Natural killer cell (primary cell): ENCODE measurements at regions of chr5 and their contacts with region 1.

Region 1: DNA sequence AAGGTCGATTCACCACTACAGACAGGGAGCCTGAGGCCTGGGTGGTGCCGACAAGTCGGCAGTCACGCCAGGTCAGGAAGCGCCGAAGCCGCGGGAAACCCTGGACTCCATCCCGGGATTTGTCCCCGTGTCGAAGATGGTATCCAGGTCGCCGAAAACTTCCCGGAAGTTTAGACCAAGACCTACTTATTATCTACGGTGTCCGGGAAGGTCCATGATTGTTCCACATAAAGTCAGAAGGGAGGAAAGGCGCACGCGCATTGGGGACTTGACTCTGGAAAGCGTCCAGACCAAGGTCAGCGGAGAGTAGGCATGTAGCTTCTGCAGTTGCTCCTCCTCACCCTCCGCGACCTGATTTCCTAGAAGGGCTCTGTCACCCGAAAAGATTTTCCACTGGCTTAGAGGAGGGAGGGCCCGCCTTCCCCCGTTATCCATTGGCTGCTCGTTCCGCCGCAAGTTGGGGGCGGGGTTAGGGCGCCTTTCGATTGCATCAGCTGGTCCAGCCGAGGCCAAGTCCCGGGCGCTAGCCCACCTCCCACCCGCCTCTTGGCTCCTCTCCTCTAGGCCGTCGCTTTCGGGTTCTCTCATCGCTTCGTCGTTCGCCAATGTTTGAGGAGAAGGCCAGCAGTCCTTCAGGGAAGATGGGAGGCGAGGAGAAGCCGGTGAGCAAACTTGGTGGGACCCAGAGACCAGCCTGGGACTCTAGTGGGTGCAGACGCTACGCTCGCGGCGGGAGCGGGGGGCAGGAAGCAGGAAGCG is at the start of gene TARS1:
- DNase-seq: peak; percentile 94 to 96
- ATAC-seq: peak; percentile 92 to 98 (median 92)
- H3K4me3 ChIP-seq: peak within 1 kb of the TSS; percentile 91
- H3K4me3 Mint-ChIP-seq: no peak within 1 kb of the TSS
- H3K27ac ChIP-seq: peak within 1 kb of the TSS; percentile 90
- H3K27ac Mint-ChIP-seq: no peak within 1 kb of the TSS
- H3K4me1 ChIP-seq: peaks cover 21% of the 10 kb centered on the region
- H3K4me1 Mint-ChIP-seq: peaks cover 23 to 31% of the 10 kb centered on the region in 2 donors
- H3K27me3 ChIP-seq: no peaks in the 10 kb centered on the region
- H3K27me3 Mint-ChIP-seq: no peaks in the 10 kb centered on the region
- CTCF ChIP-seq: no peak
- total RNA-seq, gene TARS1: 59.9 to 74.8 (median 64.6) TPM

Region 2: DNA sequence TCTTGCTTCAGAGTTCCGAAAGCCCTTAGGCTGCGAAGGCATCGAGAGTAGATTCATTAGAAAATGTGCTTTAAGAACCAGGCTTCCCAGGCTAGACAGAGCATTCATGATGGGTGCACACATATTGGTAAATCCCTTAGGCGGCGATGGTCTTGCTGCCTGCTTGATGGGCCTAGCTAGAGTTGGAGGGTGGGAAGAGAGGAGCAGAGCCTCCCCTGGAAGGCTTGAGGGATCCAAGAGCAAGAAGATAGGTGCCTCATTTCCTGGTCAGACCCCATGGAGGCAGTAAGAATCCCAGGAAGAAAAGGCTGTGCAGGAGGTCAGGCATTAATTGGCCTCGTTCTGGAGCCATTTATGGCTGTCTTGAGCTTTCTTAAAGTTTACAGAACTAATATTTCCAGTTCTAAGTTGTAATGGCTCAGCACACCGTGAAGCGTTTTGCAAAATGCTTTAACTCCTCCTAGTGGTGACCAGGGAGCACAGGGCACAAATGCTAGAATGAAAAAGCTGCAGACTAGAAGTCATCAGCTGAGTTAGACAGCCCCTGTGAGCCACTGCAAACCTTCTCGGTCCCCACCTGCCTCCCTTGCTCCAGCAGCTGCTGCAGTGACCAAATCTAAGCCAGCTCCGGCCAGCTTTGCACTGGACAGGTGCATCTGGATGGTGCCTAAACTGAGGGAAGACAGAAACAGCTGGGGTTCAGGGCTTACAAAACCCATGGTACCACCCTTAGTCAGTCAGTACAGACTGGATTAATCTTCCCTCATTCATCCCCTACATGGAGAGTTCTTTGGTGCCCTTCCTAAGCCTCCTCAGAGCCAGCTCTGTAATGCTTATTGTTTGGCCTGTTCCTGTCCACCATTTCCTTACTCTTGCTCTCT is 529.2 kb after region 1 on chr5:
- intact Hi-C with region 1: loop called (anchors 1 kb)
- DNase-seq: peak in 1 of 2 donors; percentile 42
- ATAC-seq: peak in 1 of 3 donors; percentile 35
- H3K4me3 ChIP-seq: no peak overlapping the region
- H3K4me3 Mint-ChIP-seq: no peak overlapping the region
- H3K27ac ChIP-seq: no peak overlapping the region
- H3K27ac Mint-ChIP-seq: no peak overlapping the region
- H3K4me1 ChIP-seq: no peaks in the 10 kb centered on the region
- H3K4me1 Mint-ChIP-seq: peaks cover 3 to 5% of the 10 kb centered on the region in 2 donors
- H3K27me3 ChIP-seq: no peaks in the 10 kb centered on the region
- H3K27me3 Mint-ChIP-seq: peaks cover 0 to 5% of the 10 kb centered on the region in 2 donors
- CTCF ChIP-seq: no peak